ENCODE measurements at regions of chr7 and their contacts with region 1.

Region 1: DNA sequence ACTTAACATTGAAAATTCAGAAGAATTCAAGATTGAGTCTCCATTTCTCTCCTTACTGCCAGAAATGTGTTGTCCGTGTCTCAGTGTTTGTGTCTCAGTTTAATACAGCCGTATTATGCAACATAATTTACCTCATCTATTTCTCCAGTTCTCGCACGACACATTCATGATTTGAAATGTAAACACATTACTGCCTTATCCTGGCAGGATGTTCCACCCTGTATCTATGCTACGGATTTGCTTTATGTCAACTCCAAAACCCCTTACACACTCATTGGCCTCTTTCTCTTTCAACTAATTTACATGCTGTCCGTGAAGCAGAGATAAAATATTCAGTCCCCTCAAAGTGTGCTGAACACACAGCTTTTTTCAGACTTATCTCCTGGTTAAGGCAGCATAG is 653.7 kb upstream of the SEMA3D start:
- DNase-seq: no peak
- H3K4me3 ChIP-seq: no peak overlapping the region
- H3K27ac ChIP-seq: no peak overlapping the region
- H3K4me1 ChIP-seq: no peaks in the 10 kb centered on the region
- H3K27me3 ChIP-seq: no peaks in the 10 kb centered on the region
- CTCF ChIP-seq: no peak
- POLR2A ChIP-seq: no peak

Region 2: GRCh38 chr7:85820702-85821443 is 19.7 kb before region 1 on chr7:
- CTCF ChIA-PET with region 1: no interaction called
- POLR2A ChIA-PET with region 1: no interaction called
- dilution Hi-C with region 1: no loop called
- intact Hi-C with region 1: loop called (anchors 1 kb)
- DNase-seq: no peak
- H3K4me3 ChIP-seq: no peak overlapping the region
- H3K27ac ChIP-seq: no peak overlapping the region
- H3K4me1 ChIP-seq: no peaks in the 10 kb centered on the region
- H3K27me3 ChIP-seq: no peaks in the 10 kb centered on the region
- CTCF ChIP-seq: no peak
- POLR2A ChIP-seq: no peak

Region 3: DNA sequence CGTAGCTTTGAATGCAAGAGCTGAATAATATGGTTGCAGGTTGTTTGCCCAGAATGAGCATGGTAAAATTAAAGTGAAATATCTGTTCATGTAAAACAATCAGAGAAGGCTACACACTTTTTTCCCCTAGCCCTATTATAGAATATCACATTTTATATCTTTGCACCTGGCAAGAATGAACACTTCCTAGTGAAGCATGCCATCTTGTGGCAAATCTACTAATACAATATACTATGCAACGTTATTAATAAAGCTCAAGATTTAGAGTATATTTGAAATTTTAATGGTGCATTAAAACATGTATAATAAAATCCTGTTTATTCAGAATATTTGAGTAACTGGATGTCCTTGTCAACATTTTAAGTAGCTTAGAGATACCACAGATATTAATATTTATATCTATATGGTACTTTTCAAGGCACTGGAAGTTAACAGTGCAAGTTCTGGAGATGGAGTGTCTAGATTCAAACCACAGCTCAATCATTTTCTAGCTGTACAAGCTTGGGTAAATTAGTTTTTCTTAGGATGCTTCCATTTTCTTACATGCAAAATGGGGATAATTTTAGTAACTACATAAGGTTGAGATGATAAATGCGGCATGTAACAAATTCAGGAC is 10.6 kb before region 1 on chr7:
- CTCF ChIA-PET with region 1: interaction called, 26 read pairs
- POLR2A ChIA-PET with region 1: no interaction called
- dilution Hi-C with region 1: no loop called
- intact Hi-C with region 1: no loop called
- DNase-seq: no peak
- H3K4me3 ChIP-seq: no peak overlapping the region
- H3K27ac ChIP-seq: no peak overlapping the region
- H3K4me1 ChIP-seq: no peaks in the 10 kb centered on the region
- H3K27me3 ChIP-seq: no peaks in the 10 kb centered on the region
- CTCF ChIP-seq: no peak
- POLR2A ChIP-seq: no peak

Region 4: DNA sequence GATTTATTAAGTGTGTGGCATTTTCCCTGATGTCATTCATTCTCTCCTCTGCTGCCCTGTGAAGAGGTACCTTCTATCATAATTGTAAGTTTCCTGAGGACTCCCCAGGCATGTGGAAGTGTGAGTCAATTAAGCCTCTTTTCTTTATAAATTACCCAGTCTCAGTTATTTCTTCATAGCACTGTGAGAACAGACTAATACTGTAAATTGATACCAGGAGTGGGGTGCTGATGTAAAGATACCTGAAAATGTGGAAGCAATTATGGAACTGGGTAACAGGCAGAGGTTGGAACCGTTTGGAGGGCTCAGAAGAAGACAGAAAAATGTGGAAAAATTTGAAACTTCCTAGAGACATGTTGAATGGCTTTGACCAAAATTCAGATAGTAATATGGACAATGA is 91.4 kb after region 1 on chr7:
- CTCF ChIA-PET with region 1: no interaction called
- POLR2A ChIA-PET with region 1: no interaction called
- dilution Hi-C with region 1: no loop called
- intact Hi-C with region 1: no loop called
- DNase-seq: no peak
- H3K4me3 ChIP-seq: no peak overlapping the region
- H3K27ac ChIP-seq: no peak overlapping the region
- H3K4me1 ChIP-seq: no peaks in the 10 kb centered on the region
- H3K27me3 ChIP-seq: no peaks in the 10 kb centered on the region
- CTCF ChIP-seq: no peak
- POLR2A ChIP-seq: no peak

Measured in endothelial cell of umbilical vein (primary cell).